Activated B cell treated with CpG ODN at 0.5 μM for 24 hours (primary cell): ENCODE measurements at regions of chr10 and their contacts with region 1.

Region 1: GRCh38 chr10:71812016-71812912 is 38.8 kb downstream of the PSAP start:
- DNase-seq: peak; percentile 79
- ATAC-seq: peak; percentile 94
- H3K4me3 Mint-ChIP-seq: no peak overlapping the region
- H3K27ac Mint-ChIP-seq: no peak overlapping the region
- H3K4me1 Mint-ChIP-seq: peaks cover 2% of the 10 kb centered on the region
- H3K27me3 Mint-ChIP-seq: no peaks in the 10 kb centered on the region
- CTCF ChIP-seq: no peak

Region 2: DNA sequence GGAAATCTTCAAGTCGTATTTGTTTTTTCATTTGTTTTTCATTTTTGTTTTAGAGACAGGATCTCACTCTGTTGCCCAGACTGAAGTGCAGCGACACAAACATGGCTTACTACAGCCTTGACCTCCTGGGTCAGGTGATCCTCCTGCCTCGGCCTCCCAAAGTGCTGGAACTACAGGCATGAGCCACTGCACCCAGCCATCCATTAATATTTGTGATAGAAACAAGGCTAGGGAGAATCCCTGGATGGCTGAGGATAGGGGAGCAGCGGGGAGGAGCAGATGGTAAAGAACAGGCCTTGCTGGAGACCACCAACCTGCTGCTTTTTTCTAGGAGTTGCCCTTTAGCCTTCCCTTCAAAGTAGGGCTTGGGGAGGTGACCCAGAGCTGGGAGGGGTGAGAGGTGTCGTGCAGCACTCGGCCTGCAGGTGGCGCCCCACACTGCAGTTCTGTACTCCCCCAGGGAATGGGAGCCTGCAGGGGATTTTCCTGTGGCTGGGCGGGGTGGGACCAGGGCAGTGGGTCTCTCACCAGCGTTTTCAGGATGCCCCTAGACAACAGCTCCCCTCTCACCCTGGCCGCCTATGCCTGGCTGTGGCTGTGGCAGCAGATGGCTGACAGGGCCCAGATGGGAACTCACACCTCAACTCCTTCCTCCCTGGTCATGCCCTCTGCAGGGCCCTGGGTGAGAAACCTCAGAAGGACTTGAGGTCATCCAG is 428.1 kb before region 1 on chr10:
- CTCF ChIA-PET with region 1: interaction called, 10 read pairs
- POLR2A ChIA-PET with region 1: no interaction called
- intact Hi-C with region 1: loop called (anchors 1 kb)
- DNase-seq: peak; percentile 82
- ATAC-seq: peak; percentile 100
- H3K4me3 Mint-ChIP-seq: no peak overlapping the region
- H3K27ac Mint-ChIP-seq: no peak overlapping the region
- H3K4me1 Mint-ChIP-seq: peaks cover 7% of the 10 kb centered on the region
- H3K27me3 Mint-ChIP-seq: peaks cover 3% of the 10 kb centered on the region
- CTCF ChIP-seq: no peak

Region 3: DNA sequence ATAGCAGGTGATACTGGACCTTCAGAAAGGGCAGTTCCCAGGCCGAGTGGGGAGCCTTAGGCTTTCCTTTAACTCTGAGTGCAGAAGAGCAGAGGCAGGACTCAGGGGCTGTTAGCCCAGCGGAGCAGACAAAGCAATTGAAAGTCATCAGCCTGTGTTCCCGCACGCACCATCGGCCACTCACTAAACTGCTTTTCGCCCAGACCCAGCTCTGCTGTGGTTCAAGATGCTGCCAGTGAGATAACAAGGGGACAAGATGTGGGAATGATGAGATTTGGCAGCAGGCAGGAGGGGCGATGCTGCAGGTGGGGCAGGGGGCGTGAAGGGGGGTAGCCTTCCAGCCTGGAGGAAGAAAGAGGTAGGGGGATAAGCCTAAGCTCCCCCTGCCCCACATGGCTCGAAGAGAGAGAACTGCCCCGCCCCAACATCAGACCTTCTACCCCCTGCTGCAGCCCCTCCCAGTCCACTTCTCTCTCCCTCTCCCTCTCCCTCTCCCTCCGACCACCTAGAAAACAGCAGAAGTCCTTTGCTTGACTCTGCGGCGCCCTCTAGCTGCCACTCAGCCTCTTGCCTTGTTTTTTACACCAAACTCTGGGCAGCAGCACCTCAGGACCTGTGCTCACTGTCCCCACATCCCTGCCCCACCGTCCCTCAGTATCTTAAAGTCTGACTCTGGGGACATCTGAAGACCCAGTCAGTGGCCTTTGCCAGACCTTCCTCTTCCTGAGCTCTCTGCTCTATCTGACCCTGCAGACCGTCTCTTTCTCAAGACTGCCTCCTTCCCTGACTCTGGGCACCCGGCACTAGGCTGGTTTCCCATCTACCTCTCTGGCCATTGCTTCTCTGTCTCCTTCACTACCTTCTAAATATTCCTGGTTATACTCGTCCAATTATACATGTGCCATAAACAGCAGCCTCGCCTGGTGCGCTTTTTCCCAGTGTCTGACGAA is 203.2 kb before region 1 on chr10:
- CTCF ChIA-PET with region 1: no interaction called
- POLR2A ChIA-PET with region 1: no interaction called
- intact Hi-C with region 1: loop called (anchors 1 kb)
- DNase-seq: peak; percentile 48
- ATAC-seq: no peak
- H3K4me3 Mint-ChIP-seq: no peak overlapping the region
- H3K27ac Mint-ChIP-seq: no peak overlapping the region
- H3K4me1 Mint-ChIP-seq: no peaks in the 10 kb centered on the region
- H3K27me3 Mint-ChIP-seq: peaks cover 3% of the 10 kb centered on the region
- CTCF ChIP-seq: no peak

Region 4: DNA sequence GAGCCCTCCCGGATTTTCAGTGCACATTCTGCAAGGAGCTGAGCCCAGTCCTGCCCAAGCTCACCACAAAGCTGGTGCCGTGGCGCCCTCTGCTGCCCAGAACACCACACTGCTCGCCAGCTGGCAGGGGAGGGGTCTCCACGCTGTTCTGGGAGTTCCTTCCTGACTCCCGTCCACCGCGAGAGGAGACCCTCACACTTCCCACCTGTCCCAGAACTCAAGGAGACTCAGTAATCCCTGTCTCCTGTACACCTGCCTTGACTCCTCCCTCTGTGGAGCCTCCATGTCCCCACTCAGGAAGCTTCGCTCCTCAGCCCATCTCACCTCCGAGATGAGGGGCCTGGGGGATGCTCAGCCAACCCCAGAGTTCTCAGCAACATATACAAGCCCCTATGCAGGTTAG is 104.0 kb before region 1 on chr10:
- CTCF ChIA-PET with region 1: interaction called, 47 read pairs
- POLR2A ChIA-PET with region 1: no interaction called
- intact Hi-C with region 1: loop called (anchors 1 kb)
- DNase-seq: peak; percentile 71
- ATAC-seq: peak; percentile 84
- H3K4me3 Mint-ChIP-seq: no peak overlapping the region
- H3K27ac Mint-ChIP-seq: no peak overlapping the region
- H3K4me1 Mint-ChIP-seq: peaks cover 22% of the 10 kb centered on the region
- H3K27me3 Mint-ChIP-seq: no peaks in the 10 kb centered on the region
- CTCF ChIP-seq: peak; percentile 33

Region 5: GRCh38 chr10:71742301-71743088 is 69.8 kb before region 1 on chr10:
- CTCF ChIA-PET with region 1: no interaction called
- POLR2A ChIA-PET with region 1: no interaction called
- intact Hi-C with region 1: no loop called
- DNase-seq: no peak
- ATAC-seq: no peak
- H3K4me3 Mint-ChIP-seq: no peak overlapping the region
- H3K27ac Mint-ChIP-seq: peak overlapping the region; percentile 1
- H3K4me1 Mint-ChIP-seq: peaks cover 59% of the 10 kb centered on the region
- H3K27me3 Mint-ChIP-seq: no peaks in the 10 kb centered on the region
- CTCF ChIP-seq: no peak

Region 6: GRCh38 chr10:71771821-71772617 is 40.2 kb before region 1 on chr10:
- CTCF ChIA-PET with region 1: interaction called, 6 read pairs
- POLR2A ChIA-PET with region 1: interaction called, 4 read pairs
- intact Hi-C with region 1: loop called (anchors 5 kb)
- DNase-seq: no peak
- ATAC-seq: no peak
- H3K4me3 Mint-ChIP-seq: peak overlapping the region; percentile 88
- H3K27ac Mint-ChIP-seq: peak overlapping the region; percentile 87
- H3K4me1 Mint-ChIP-seq: peaks cover 95% of the 10 kb centered on the region
- H3K27me3 Mint-ChIP-seq: no peaks in the 10 kb centered on the region
- CTCF ChIP-seq: no peak

Region 7: DNA sequence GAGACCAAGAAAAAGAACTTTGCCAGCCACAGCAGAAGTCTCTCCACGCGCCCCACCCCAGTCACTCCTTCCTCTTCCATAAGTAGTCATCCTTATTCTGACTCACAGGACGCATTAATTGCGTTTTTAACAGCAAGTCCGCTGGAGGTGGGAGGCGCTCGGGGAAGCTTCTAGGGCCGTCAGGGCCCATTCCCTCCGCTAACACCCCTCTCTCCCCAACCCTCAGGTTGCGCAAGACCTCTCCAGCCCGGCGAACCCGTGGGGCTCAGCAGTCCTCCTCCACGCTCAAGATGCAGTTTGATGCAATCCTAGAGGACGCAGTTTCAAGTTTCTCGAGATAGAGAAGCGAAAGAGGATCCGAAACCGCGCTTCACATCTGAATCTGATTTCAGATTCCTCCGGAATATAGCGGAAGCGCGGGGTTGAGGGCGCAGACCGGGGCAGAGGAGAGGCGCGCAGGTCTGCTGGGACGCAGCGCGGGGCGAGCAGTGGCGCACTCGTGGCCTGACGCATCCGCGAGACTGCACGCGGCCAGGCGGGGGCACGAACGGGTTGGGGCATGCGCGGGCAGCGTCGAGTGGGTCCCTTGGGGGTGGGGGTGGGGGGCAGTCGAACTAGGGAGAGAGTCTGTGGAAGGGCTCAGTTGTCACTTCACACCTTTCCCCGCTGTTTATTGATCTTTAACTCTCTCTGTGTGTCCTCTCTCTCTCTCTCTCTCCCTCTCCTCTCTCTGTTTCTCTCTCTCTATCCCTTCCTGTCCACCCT is 76.5 kb after region 1 on chr10:
- CTCF ChIA-PET with region 1: interaction called, 6 read pairs
- POLR2A ChIA-PET with region 1: no interaction called
- intact Hi-C with region 1: loop called (anchors 1 kb)
- DNase-seq: peak; percentile 82
- ATAC-seq: peak; percentile 94
- H3K4me3 Mint-ChIP-seq: peak overlapping the region; percentile 87
- H3K27ac Mint-ChIP-seq: peak overlapping the region; percentile 92
- H3K4me1 Mint-ChIP-seq: peaks cover 39% of the 10 kb centered on the region
- H3K27me3 Mint-ChIP-seq: no peaks in the 10 kb centered on the region
- CTCF ChIP-seq: no peak